Adrenal gland (tissue), 19 donors: ENCODE measurements at regions of chr1 and their contacts with region 1.

Region 1: GRCh38 chr1:204363335-204364124 is 3.8 kb upstream of the PLEKHA6 start:
- DNase-seq: peak; percentile 59 to 85 (median 68)
- H3K4me3 ChIP-seq: peak overlapping the region in 2 of 4 donors; percentile 17 to 30
- H3K27ac ChIP-seq: peak overlapping the region in 2 of 5 donors; percentile 7 to 46
- H3K4me1 ChIP-seq: peaks cover 6 to 10% of the 10 kb centered on the region in 2 donors
- H3K27me3 ChIP-seq: no peaks in the 10 kb centered on the region
- CTCF ChIP-seq: peak; percentile 95 to 99 (median 97)
- POLR2A ChIP-seq: no peak

Region 2: GRCh38 chr1:204162231-204163074 is 201.1 kb before region 1 on chr1:
- intact Hi-C with region 1: loop called (anchors 5 kb)
- DNase-seq: peak; percentile 71 to 91 (median 80)
- H3K4me3 ChIP-seq: no peak overlapping the region
- H3K27ac ChIP-seq: no peak overlapping the region
- H3K4me1 ChIP-seq: no peaks in the 10 kb centered on the region
- H3K27me3 ChIP-seq: no peaks in the 10 kb centered on the region
- CTCF ChIP-seq: peak; percentile 96 to 100 (median 97)
- POLR2A ChIP-seq: no peak

Region 3: DNA sequence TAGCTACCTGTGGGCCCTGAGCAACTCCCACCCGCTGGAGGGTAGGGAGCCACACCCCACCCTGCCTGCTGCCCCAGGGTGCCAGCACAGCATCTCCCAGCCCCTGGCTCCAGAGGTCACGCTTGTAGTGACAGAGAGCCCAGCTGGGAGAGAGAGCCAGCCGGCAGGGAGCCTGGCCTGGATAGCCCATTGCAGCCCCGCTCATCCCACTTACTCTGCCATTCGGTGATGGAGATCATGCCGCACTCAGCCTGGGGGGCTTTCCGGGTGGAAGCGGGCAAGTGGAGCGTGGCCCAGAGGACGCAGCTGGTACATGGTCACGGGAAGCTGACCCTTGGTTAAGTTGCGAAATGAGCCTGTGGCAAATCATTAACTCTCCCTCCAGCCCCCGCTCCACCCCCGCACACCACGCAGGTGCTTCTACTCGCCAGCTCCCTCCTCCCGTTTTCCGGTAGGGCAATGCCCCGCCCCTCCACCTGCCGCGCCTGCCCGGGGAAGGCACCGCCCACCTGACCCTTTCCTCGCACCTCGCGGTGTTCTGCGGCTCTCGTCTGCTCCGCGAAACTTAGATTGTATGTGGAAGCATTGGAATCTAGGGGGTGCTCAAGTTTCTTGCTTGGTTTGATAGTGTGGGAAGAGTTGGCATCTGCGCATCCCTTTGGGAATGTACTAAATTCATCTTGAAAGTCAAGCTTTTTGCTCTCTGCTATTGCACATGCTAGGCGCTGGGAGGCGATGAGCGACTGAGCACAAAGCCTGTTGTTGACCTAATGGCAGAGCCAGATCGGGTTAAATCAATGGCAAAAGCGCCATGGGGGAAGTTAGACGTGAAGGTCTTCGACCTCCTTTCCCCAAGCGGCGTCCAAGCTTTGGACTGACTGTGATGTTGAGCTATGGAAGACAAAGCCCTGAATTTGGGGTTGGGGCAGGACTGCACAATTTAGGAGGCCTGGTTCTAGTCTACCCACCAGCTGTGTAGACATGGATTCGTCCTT is 149.6 kb before region 1 on chr1 and contains the start of gene GOLT1A:
- intact Hi-C with region 1: loop called (anchors 5 kb)
- DNase-seq: peak; percentile 47 to 84 (median 68)
- H3K4me3 ChIP-seq: peak within 1 kb of the TSS in 1 of 4 donors; percentile 21
- H3K27ac ChIP-seq: no peak within 1 kb of the TSS
- H3K4me1 ChIP-seq: peaks cover 0 to 9% of the 10 kb centered on the region in 2 donors
- H3K27me3 ChIP-seq: no peaks in the 10 kb centered on the region
- CTCF ChIP-seq: peak; percentile 28 to 79 (median 62)
- POLR2A ChIP-seq: no peak
- total RNA-seq, gene GOLT1A: 0.32 TPM in 1 of 9 donors, not detected in the others

Region 4: DNA sequence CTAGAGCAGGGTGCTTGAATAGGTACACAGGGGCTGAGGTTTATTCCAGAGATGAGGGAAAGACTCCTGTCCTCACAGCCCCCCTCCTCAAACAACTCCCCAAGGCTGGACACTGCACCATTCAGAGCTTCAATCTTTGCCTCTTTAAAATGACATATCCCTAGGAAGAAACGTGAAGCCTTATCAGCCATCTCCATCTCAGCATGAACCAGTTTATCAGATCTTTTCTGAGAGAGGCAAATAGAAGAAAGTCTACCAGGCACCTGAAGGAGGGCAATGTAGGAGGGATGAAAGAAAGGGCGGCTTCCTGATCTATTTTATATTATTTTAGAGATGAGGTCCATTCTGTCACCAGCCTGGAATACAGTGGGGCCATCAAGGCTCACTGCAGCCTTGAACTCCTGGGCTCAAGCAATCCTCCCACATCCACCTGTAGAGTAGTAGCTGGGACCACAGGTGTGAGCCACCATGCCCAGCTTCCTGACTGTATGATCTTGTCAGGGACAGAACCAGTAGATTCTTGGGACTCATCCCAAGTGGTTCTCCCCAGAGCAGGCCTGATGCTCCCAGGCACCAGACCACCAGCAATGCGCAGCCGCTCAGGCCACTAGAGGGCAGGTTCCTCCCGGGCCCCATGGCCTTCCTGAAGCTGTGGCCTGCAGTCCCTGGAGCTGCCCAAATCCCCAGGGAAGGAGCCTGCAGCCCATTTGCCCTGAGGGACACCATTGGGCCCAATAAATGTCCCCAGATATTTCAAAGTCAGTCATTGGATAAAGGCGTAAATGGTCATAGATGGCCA is 105.4 kb before region 1 on chr1:
- intact Hi-C with region 1: loop called (anchors 2 to 5 kb)
- DNase-seq: peak; percentile 63 to 90 (median 77)
- H3K4me3 ChIP-seq: no peak overlapping the region
- H3K27ac ChIP-seq: no peak overlapping the region
- H3K4me1 ChIP-seq: no peaks in the 10 kb centered on the region
- H3K27me3 ChIP-seq: no peaks in the 10 kb centered on the region
- CTCF ChIP-seq: peak; percentile 56 to 83 (median 71)
- POLR2A ChIP-seq: no peak

Region 5: GRCh38 chr1:204418174-204419063 is 54.9 kb after region 1 on chr1:
- intact Hi-C with region 1: no loop called
- DNase-seq: peak in 3 of 7 donors; percentile 25 to 52 (median 44)
- H3K4me3 ChIP-seq: no peak overlapping the region
- H3K27ac ChIP-seq: peak overlapping the region; percentile 86 to 95 (median 89)
- H3K4me1 ChIP-seq: peaks cover 38 to 44% of the 10 kb centered on the region in 2 donors
- H3K27me3 ChIP-seq: no peaks in the 10 kb centered on the region
- CTCF ChIP-seq: no peak
- POLR2A ChIP-seq: peak in 1 of 2 donors; percentile 34